HCT116 (cell line): ENCODE measurements at regions of chr9 and their contacts with region 1.

Region 1: GRCh38 chr9:6024020-6024554 is 8.7 kb upstream of the RANBP6 start:
- DNase-seq: peak; percentile 66
- ATAC-seq: peak; percentile 94
- H3K4me3 ChIP-seq: peak overlapping the region in 1 of 2 experiments; percentile 36; a peak in 2 of 4 replicates
- H3K27ac ChIP-seq: peak overlapping the region; percentile 19; the same call in 1 of the 2 replicates
- H3K4me1 ChIP-seq: peaks cover 3 to 10% of the 10 kb centered on the region in 2 experiments; a peak in 3 of 4 replicates
- H3K27me3 ChIP-seq: no peaks in the 10 kb centered on the region
- CTCF ChIP-seq: peak; percentile 37 to 67 (median 67); a peak in 5 of 6 replicates
- POLR2A ChIP-seq: no peak
- RAD21 ChIP-seq: no peak

Region 2: DNA sequence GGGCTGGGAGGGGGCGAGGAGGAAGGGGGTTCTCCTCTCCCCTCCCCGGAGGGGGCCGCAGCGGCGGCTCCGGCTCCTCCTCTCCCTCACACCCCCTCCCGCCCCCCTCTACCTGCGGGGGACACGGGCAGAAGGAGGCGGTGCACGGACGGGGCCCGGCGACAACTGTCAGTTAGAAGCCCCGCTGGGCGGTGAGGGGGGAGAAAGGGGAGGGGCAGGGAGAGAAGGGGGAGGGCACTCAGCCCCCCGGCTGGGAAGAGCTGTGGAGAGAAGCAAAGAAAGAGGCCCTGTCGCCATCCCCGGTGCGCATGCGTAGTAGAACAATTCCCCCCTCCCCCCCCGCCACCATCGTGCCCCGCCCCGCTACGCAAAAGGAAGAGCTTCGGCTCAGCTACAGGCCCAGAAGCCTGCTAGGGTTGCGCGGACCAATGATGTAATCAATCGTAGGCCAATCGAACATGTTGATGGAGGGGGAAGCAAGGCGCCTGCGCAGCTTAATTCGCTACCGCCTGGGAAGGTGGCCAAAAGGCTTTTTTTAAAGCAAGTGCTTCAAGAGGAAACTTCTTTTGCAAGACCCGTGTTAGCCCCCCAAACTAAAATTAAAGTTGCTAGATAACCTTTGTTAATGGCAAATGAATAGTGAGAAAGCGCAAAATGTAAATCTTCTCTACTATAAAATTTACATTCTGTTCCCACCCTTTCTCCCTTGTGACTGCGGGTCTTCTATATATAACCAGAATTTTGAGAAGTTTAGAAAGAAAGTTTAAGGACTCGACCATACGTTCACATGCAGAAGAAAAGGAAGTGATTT is 15.7 kb before region 1 on chr9:
- CTCF ChIA-PET with region 1: interaction called, 10 read pairs
- POLR2A ChIA-PET with region 1: interaction called, 5 read pairs
- RAD21 ChIA-PET with region 1: no interaction called
- intact Hi-C with region 1: no loop called
- DNase-seq: peak; percentile 98
- ATAC-seq: peak; percentile 74
- H3K4me3 ChIP-seq: peak overlapping the region; percentile 70 to 79
- H3K27ac ChIP-seq: peak overlapping the region; percentile 85
- H3K4me1 ChIP-seq: peaks cover 13 to 17% of the 10 kb centered on the region in 2 experiments; a peak in 3 of 4 replicates
- H3K27me3 ChIP-seq: no peaks in the 10 kb centered on the region
- CTCF ChIP-seq: no peak
- POLR2A ChIP-seq: no peak
- RAD21 ChIP-seq: no peak